ENCODE measurements at regions of chr2 and their contacts with region 1.

Region 1: GRCh38 chr2:225002039-225002655 is 40.1 kb downstream of the DOCK10 start:
- DNase-seq: peak; percentile 67 to 77 (median 69)
- H3K4me3 ChIP-seq: no peak overlapping the region
- H3K4me3 Mint-ChIP-seq: peak overlapping the region in 5 of 8 donors; percentile 35 to 64 (median 48)
- H3K27ac ChIP-seq: peak overlapping the region; percentile 34
- H3K27ac Mint-ChIP-seq: peak overlapping the region; percentile 57 to 85 (median 75)
- H3K4me1 ChIP-seq: peaks cover 71% of the 10 kb centered on the region
- H3K4me1 Mint-ChIP-seq: peaks cover 46 to 93% (median 80%) of the 10 kb centered on the region in 4 donors
- H3K27me3 ChIP-seq: no peaks in the 10 kb centered on the region
- H3K27me3 Mint-ChIP-seq: no peaks in the 10 kb centered on the region

Region 2: DNA sequence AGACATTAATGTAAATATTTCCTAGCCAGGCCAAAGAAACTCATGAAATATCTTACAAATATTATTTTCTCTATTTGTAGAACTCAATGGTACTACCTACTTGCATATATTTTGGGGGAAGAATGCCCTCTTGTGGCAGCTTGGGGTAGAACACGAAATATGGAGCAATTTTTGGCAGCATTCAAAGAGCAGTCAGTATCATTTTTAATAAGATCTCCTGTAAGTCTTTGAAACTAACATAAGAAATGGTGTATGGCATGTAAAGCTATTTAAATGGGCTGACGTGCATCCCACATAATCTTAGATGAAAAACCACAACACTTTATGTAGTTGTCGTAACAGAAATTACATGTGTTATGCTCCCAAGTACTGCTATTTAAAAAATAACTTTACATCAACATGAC is 223.7 kb before region 1 on chr2:
- CTCF ChIA-PET with region 1: interaction called, 4 read pairs
- POLR2A ChIA-PET with region 1: no interaction called
- intact Hi-C with region 1: loop called (anchors 10 kb)
- DNase-seq: peak; percentile 46 to 58 (median 54)
- H3K4me3 ChIP-seq: no peak overlapping the region
- H3K4me3 Mint-ChIP-seq: no peak overlapping the region
- H3K27ac ChIP-seq: no peak overlapping the region
- H3K27ac Mint-ChIP-seq: peak overlapping the region in 3 of 7 donors; percentile 0 to 65 (median 25)
- H3K4me1 ChIP-seq: no peaks in the 10 kb centered on the region
- H3K4me1 Mint-ChIP-seq: peaks cover 0 to 5% (median 0%) of the 10 kb centered on the region in 4 donors
- H3K27me3 ChIP-seq: no peaks in the 10 kb centered on the region
- H3K27me3 Mint-ChIP-seq: no peaks in the 10 kb centered on the region

Region 3: DNA sequence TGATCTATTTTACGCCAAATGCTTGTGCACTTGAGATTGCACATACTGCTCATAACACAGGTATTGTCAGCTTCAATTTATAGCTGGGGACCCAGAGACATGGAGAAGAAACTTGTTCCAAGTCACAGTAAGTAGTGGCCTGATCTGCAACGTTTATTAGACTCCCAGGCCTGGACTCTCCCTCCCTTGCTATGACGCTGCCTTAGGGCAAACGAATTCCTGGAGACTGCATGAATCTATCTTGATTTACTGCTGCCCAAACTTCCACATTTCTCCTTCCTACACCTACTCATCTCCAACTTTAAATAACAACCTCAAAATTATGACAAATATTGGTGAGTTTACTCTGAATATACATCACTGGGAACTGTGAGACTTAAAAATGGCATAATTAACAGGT is 140.9 kb before region 1 on chr2:
- CTCF ChIA-PET with region 1: interaction called, 17 read pairs
- POLR2A ChIA-PET with region 1: interaction called, 3 read pairs
- intact Hi-C with region 1: loop called (anchors 10 kb)
- DNase-seq: no peak
- H3K4me3 ChIP-seq: no peak overlapping the region
- H3K4me3 Mint-ChIP-seq: no peak overlapping the region
- H3K27ac ChIP-seq: no peak overlapping the region
- H3K27ac Mint-ChIP-seq: peak overlapping the region in 2 of 7 donors; percentile 53 to 86
- H3K4me1 ChIP-seq: no peaks in the 10 kb centered on the region
- H3K4me1 Mint-ChIP-seq: peaks cover 0 to 4% (median 0%) of the 10 kb centered on the region in 4 donors
- H3K27me3 ChIP-seq: no peaks in the 10 kb centered on the region
- H3K27me3 Mint-ChIP-seq: no peaks in the 10 kb centered on the region

Region 4: DNA sequence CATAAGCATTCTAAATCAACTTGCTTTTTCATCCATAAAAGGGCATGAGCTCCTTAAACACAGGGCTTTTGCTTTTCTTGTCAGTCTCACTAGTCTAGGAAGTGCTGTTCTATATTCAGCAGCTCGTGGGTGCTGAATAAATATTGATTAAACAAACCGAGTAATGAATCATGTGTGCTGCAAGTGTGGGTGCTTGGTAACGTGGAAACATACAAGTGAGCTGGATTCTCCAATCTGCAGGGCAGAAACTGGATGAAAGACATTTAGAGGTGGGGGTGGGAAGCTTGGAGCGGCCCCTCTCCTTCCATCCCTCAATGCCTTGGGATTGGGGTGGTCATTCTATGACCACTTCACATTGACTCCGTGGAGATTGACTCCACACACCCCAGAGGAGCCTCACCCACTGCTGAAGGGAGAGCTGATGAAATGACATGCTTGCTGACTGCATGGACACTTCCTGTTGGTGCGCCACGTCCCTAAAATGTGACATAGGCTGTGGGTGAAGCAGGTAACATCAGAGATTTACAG is 74.4 kb before region 1 on chr2:
- CTCF ChIA-PET with region 1: interaction called, 92 read pairs
- POLR2A ChIA-PET with region 1: interaction called, 14 read pairs
- intact Hi-C with region 1: loop called (anchors 1 kb)
- DNase-seq: peak; percentile 83 to 92 (median 85)
- H3K4me3 ChIP-seq: peak overlapping the region in 1 of 2 donors; percentile 12
- H3K4me3 Mint-ChIP-seq: peak overlapping the region; percentile 65 to 72 (median 70)
- H3K27ac ChIP-seq: peak overlapping the region; percentile 63
- H3K27ac Mint-ChIP-seq: peak overlapping the region; percentile 92 to 99 (median 96)
- H3K4me1 ChIP-seq: peaks cover 100% of the 10 kb centered on the region
- H3K4me1 Mint-ChIP-seq: peaks cover 89 to 100% (median 94%) of the 10 kb centered on the region in 4 donors
- H3K27me3 ChIP-seq: no peaks in the 10 kb centered on the region
- H3K27me3 Mint-ChIP-seq: no peaks in the 10 kb centered on the region

Region 5: DNA sequence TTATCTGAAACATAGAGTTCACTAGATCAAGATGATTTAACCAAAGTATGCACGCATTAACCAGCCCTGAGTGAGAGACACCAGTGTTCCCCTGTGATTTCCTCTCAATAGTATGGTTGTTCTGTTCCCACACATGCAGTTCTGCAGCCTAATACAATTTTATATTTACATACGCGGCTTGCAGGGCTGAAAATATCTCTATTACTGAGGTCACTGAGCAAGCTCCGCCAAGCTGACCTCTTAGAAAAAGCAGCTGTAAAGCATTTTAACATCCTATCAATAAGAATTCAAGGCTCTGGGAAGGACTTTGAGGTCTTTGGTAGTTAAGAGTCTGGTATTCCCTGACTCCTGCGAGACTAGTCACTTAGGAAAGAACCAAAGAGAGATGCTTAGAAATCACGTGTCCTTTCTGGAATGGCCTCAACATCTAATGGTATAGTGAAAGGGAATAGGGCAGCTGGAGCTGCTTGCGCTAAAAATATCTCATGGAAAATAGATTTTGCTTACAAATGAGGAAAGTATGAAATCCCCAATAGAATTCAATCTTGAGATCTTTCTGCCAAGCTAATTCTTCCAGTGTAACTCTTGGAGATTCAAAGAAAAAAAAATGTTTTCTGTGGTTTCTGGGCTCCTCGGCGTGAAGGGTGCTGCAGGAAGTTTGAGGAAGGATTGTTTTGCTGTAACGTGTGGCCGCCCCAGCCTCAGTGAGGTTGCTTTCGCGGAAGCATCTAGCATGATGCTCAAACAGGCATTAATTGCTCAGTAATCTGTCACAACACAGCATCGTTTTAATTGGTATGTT is 19.0 kb before region 1 on chr2:
- CTCF ChIA-PET with region 1: interaction called, 49 read pairs
- POLR2A ChIA-PET with region 1: interaction called, 3 read pairs
- intact Hi-C with region 1: no loop called
- DNase-seq: peak in 4 of 5 donors; percentile 25 to 45 (median 39)
- H3K4me3 ChIP-seq: no peak overlapping the region
- H3K4me3 Mint-ChIP-seq: peak overlapping the region; percentile 29 to 86 (median 80)
- H3K27ac ChIP-seq: peak overlapping the region; percentile 18
- H3K27ac Mint-ChIP-seq: peak overlapping the region; percentile 79 to 95 (median 92)
- H3K4me1 ChIP-seq: peaks cover 69% of the 10 kb centered on the region
- H3K4me1 Mint-ChIP-seq: peaks cover 59 to 88% (median 73%) of the 10 kb centered on the region in 4 donors
- H3K27me3 ChIP-seq: no peaks in the 10 kb centered on the region
- H3K27me3 Mint-ChIP-seq: no peaks in the 10 kb centered on the region

Region 6: DNA sequence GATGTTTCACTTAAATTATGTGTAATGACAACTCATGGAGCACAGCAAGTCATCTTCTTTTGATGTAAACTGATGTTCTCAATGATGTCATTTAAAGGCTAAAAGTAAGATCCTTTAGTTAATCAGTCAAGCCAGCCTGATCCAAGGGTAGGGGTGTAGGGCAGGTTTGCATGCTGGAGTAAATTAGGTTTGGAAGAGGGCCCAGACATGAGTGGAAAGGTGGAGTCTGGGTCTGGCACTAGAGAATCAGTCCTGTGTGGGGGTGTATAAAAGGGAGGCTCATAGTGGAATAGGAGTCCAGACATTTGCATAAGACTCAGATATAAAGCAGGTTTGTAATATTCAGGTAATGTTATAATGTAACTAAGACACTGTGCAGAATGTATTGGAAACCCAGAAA is 308.6 kb after region 1 on chr2:
- CTCF ChIA-PET with region 1: no interaction called
- POLR2A ChIA-PET with region 1: no interaction called
- intact Hi-C with region 1: no loop called
- DNase-seq: no peak
- H3K4me3 ChIP-seq: no peak overlapping the region
- H3K4me3 Mint-ChIP-seq: no peak overlapping the region
- H3K27ac ChIP-seq: no peak overlapping the region
- H3K27ac Mint-ChIP-seq: peak overlapping the region in 1 of 7 donors; percentile 33
- H3K4me1 ChIP-seq: no peaks in the 10 kb centered on the region
- H3K4me1 Mint-ChIP-seq: peaks cover 0 to 1% (median 0%) of the 10 kb centered on the region in 4 donors
- H3K27me3 ChIP-seq: no peaks in the 10 kb centered on the region
- H3K27me3 Mint-ChIP-seq: peaks cover 0 to 7% of the 10 kb centered on the region in 2 donors

Region 7: DNA sequence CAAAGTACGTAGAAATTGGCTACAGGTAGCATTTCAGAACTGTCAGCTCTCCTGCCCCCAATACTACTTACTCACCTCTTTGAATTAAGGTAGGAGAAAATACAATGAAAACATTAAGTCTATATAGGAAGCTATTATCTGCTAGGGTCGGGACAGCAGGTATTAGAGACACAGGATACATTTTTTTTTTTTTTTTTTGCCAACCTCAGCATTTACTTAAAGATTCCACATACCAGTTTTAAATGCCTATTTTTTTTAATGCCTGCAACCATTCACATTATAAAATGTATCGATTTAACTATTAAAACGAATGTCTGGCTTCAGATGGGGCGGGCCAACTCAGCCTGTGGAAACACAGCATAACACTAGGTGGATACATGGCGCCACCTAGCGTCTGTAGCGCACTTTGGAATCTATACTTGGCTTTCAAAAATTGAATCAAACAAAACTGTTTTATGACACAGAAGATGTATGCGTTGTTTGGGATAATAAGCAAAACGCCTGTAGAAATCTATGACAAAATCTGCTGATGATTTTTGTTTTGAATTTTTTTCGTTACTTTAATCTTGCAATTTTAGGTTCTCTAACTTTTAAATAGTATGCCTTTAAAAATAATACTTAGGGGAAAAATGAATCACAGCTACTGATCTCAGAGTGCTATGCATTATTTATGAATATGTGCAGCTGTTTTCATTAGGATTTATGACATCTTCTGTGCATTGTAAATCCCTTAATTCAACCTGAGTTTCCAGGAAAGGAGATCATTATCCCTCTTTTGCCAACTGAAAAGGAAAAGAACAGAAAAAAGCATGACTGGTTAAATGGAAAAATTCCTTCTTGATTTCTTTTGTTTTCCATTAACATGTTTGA is 658.4 kb after region 1 on chr2:
- CTCF ChIA-PET with region 1: interaction called, 12 read pairs
- POLR2A ChIA-PET with region 1: no interaction called
- intact Hi-C with region 1: loop called (anchors 1 kb)
- DNase-seq: peak; percentile 51 to 63 (median 61)
- H3K4me3 ChIP-seq: no peak overlapping the region
- H3K4me3 Mint-ChIP-seq: no peak overlapping the region
- H3K27ac ChIP-seq: no peak overlapping the region
- H3K27ac Mint-ChIP-seq: no peak overlapping the region
- H3K4me1 ChIP-seq: no peaks in the 10 kb centered on the region
- H3K4me1 Mint-ChIP-seq: peaks cover 0 to 2% (median under 1%) of the 10 kb centered on the region in 4 donors
- H3K27me3 ChIP-seq: no peaks in the 10 kb centered on the region
- H3K27me3 Mint-ChIP-seq: peaks cover 10 to 15% of the 10 kb centered on the region in 2 donors

Measured in CD4-positive, alpha-beta memory T cell (primary cell).